Activated T-helper 1 cell treated with anti-CD3 and anti-CD28 coated beads, Interleukin-12 subunit alpha, Interleukin-12 subunit beta, Interleukin-2, Interleukin-4 antibody, amounts not matched to agents 30 ng/mL and 10 ng/mL and 1 ng/mL, durations not matched to agents 14 hours and 24 hours and 36 hours (primary cell): ENCODE measurements at regions of chr1 and their contacts with region 1.

Region 1: DNA sequence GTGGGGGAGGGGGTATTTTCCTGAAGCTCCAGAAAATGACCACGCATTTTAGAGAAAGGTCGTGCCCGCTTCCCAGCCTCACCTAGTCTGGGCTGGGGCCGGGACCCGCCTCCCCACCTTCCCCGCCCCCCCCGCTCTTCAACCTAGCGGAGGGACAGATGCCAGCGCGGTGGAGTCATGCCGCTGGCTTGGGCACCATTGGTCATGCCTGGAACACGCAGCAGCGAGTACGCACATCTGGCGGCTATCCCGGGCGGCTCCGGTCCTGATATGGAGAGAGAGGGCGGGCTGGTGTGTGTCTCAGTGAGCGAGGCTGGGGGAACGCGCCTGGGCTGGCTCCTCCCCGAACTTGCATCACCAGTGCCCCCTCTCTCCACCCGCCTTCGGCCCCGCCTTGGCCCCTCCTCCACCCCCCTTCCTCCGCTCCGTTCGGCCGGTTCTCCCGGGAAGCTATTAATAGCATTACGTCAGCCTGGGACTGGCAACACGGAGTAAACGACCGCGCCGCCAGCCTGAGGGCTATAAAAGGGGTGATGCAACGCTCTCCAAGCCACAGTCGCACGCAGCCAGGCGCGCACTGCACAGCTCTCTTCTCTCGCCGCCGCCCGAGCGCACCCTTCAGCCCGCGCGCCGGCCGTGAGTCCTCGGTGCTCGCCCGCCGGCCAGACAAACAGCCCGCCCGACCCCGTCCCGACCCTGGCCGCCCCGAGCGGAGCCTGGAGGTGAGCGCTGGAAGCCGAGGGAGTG is at the start of gene ATF3:
- DNase-seq: peak; percentile 90
- H3K4me3 Mint-ChIP-seq: peak within 1 kb of the TSS; percentile 95
- H3K27ac Mint-ChIP-seq: peak within 1 kb of the TSS; percentile 97
- H3K4me1 Mint-ChIP-seq: peaks cover 63% of the 10 kb centered on the region
- H3K27me3 Mint-ChIP-seq: peaks cover 36% of the 10 kb centered on the region
- total RNA-seq, gene ATF3: 23.0 and 23.3 TPM in 2 replicates

Region 2: DNA sequence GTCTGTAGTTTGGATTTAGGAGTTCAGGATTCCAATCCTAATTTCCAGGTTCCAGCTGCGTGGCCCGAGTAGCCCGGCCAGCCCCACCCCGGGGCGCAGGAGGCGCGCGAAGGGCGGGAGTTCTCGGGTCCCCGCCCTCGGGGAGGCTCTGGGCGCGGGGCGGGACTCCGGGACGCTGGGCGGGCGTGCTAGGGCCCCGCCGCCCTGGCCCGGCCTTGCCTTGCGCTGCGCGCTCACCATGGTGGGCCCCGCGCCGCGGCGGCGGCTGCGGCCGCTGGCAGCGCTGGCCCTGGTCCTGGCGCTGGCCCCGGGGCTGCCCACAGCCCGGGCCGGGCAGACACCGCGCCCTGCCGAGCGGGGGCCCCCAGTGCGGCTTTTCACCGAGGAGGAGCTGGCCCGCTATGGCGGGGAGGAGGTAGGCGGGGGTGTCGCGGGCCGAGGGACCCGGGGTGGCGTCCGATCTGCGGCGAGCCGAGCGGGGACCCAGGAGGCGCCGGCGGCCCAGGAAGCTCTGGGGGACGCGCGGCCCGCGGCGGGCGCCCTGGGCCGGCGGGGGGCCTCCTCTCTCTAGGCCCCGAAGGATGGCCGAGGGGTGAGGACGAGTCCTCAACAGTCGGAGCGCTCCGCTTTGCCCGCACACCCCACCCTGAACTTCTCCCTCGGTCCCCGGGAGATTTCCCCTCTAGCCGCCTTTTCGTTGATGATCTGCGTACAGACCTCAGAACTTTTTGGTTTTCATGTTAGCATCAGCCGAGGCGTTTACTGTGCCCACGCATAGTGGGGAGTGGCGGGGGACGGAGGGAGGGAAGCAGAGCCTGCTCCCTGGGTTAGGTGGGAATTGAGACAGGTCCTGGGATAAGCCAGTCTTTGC is 175.4 kb before region 1 on chr1 and contains the start of gene NENF:
- intact Hi-C with region 1: loop called (anchors 1 kb)
- DNase-seq: peak; percentile 74
- H3K4me3 Mint-ChIP-seq: peak within 1 kb of the TSS; percentile 77
- H3K27ac Mint-ChIP-seq: peak within 1 kb of the TSS; percentile 53
- H3K4me1 Mint-ChIP-seq: peaks cover 32% of the 10 kb centered on the region
- H3K27me3 Mint-ChIP-seq: peaks cover 6% of the 10 kb centered on the region
- total RNA-seq, gene NENF: 29.7 and 32.5 TPM in 2 replicates

Region 3: GRCh38 chr1:212566522-212567479 is 41.6 kb before region 1 on chr1:
- intact Hi-C with region 1: loop called (anchors 1 kb)
- DNase-seq: peak; percentile 57
- H3K4me3 Mint-ChIP-seq: peak overlapping the region; percentile 85
- H3K27ac Mint-ChIP-seq: peak overlapping the region; percentile 94
- H3K4me1 Mint-ChIP-seq: peaks cover 32% of the 10 kb centered on the region
- H3K27me3 Mint-ChIP-seq: peaks cover 20% of the 10 kb centered on the region

Region 4: GRCh38 chr1:212621951-212622305 is 13.5 kb after region 1 on chr1:
- intact Hi-C with region 1: no loop called
- DNase-seq: no peak
- H3K4me3 Mint-ChIP-seq: no peak overlapping the region
- H3K27ac Mint-ChIP-seq: no peak overlapping the region
- H3K4me1 Mint-ChIP-seq: peaks cover 18% of the 10 kb centered on the region
- H3K27me3 Mint-ChIP-seq: peaks cover 4% of the 10 kb centered on the region

Region 5: GRCh38 chr1:212665241-212666115 is 57.1 kb after region 1 on chr1:
- intact Hi-C with region 1: loop called (anchors 1 kb)
- DNase-seq: peak; percentile 74
- H3K4me3 Mint-ChIP-seq: peak overlapping the region; percentile 82
- H3K27ac Mint-ChIP-seq: peak overlapping the region; percentile 70
- H3K4me1 Mint-ChIP-seq: peaks cover 24% of the 10 kb centered on the region
- H3K27me3 Mint-ChIP-seq: peaks cover 13% of the 10 kb centered on the region

Region 6: GRCh38 chr1:212782422-212783154 is 174.2 kb after region 1 on chr1:
- intact Hi-C with region 1: loop called (anchors 2 kb)
- DNase-seq: no peak
- H3K4me3 Mint-ChIP-seq: no peak overlapping the region
- H3K27ac Mint-ChIP-seq: no peak overlapping the region
- H3K4me1 Mint-ChIP-seq: peaks cover 4% of the 10 kb centered on the region
- H3K27me3 Mint-ChIP-seq: no peaks in the 10 kb centered on the region